HEK293 (cell line): ENCODE measurements at regions of chr14 and their contacts with region 1.

Region 1: GRCh38 chr14:22872033-22872832 is 693 bp downstream of the LRP10 start:
- H3K4me3 ChIP-seq: peak overlapping the region; percentile 74
- H3K27ac ChIP-seq: peak overlapping the region; percentile 87
- H3K4me1 ChIP-seq: peaks cover 9% of the 10 kb centered on the region
- CTCF ChIP-seq: peak; percentile 86

Region 2: GRCh38 chr14:22886500-22887259 is 14.4 kb after region 1 on chr14:
- CTCF ChIA-PET with region 1: interaction called, 55 read pairs
- POLR2A ChIA-PET with region 1: interaction called, 7 read pairs
- H3K4me3 ChIP-seq: peak overlapping the region; percentile 55
- H3K27ac ChIP-seq: peak overlapping the region; percentile 78
- H3K4me1 ChIP-seq: peaks cover 6% of the 10 kb centered on the region
- CTCF ChIP-seq: peak; percentile 69; the same call in 1 of the 2 replicates